ENCODE measurements at regions of chr7 and their contacts with region 1.

Region 1: GRCh38 chr7:57398548-57398947 is 51.4 kb upstream of the ZNF716 start:
- DNase-seq: no peak
- ATAC-seq: no peak
- H3K4me3 ChIP-seq: no peak overlapping the region
- H3K27ac ChIP-seq: no peak overlapping the region
- H3K4me1 ChIP-seq: no peaks in the 10 kb centered on the region
- H3K27me3 ChIP-seq: no peaks in the 10 kb centered on the region
- CTCF ChIP-seq: no peak

Region 2: GRCh38 chr7:55957190-55957963 is 1441.2 kb before region 1 on chr7:
- CTCF ChIA-PET with region 1: no interaction called
- POLR2A ChIA-PET with region 1: no interaction called
- in situ Hi-C with region 1: no loop called
- intact Hi-C with region 1: no loop called
- DNase-seq: no peak
- ATAC-seq: no peak
- H3K4me3 ChIP-seq: no peak overlapping the region
- H3K27ac ChIP-seq: no peak overlapping the region
- H3K4me1 ChIP-seq: no peaks in the 10 kb centered on the region
- H3K27me3 ChIP-seq: no peaks in the 10 kb centered on the region
- CTCF ChIP-seq: no peak

Region 3: DNA sequence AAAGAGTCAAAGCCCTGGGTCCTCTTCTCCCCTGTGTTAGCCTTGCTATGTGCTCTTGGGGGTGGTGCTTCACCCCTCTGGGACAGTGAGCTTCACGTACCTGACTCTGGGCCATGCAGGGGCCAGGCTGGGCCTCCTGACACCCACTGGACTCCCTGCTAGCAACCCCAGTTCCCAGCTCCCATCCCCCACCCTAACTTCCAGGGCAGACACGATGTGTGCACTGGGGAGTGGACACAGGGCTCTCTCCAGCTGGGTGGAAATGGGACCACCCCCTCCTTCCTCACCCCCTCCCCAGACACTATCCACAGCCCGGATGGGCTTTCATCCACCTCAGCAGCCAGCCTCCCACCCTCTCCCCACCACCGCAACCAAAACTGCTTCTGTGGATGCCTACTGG is 153.3 kb before region 1 on chr7:
- CTCF ChIA-PET with region 1: no interaction called
- POLR2A ChIA-PET with region 1: no interaction called
- in situ Hi-C with region 1: no loop called
- intact Hi-C with region 1: no loop called
- DNase-seq: no peak
- ATAC-seq: no peak
- H3K4me3 ChIP-seq: no peak overlapping the region
- H3K27ac ChIP-seq: no peak overlapping the region
- H3K4me1 ChIP-seq: no peaks in the 10 kb centered on the region
- H3K27me3 ChIP-seq: no peaks in the 10 kb centered on the region
- CTCF ChIP-seq: no peak

Region 4: GRCh38 chr7:57438244-57438643 is 39.7 kb after region 1 on chr7:
- CTCF ChIA-PET with region 1: no interaction called
- POLR2A ChIA-PET with region 1: no interaction called
- in situ Hi-C with region 1: no loop called
- intact Hi-C with region 1: no loop called
- DNase-seq: no peak
- ATAC-seq: no peak
- H3K4me3 ChIP-seq: no peak overlapping the region
- H3K27ac ChIP-seq: no peak overlapping the region
- H3K4me1 ChIP-seq: no peaks in the 10 kb centered on the region
- H3K27me3 ChIP-seq: no peaks in the 10 kb centered on the region
- CTCF ChIP-seq: no peak

Region 5: GRCh38 chr7:57449904-57450303 is 51.4 kb after region 1 on chr7 and contains the start of gene ZNF716:
- CTCF ChIA-PET with region 1: no interaction called
- POLR2A ChIA-PET with region 1: no interaction called
- in situ Hi-C with region 1: no loop called
- intact Hi-C with region 1: loop called (anchors 10 kb)
- DNase-seq: no peak
- ATAC-seq: peak; percentile 78
- H3K4me3 ChIP-seq: peak within 1 kb of the TSS; percentile 22 to 35
- H3K27ac ChIP-seq: no peak within 1 kb of the TSS
- H3K4me1 ChIP-seq: no peaks in the 10 kb centered on the region
- H3K27me3 ChIP-seq: no peaks in the 10 kb centered on the region
- CTCF ChIP-seq: no peak
- total RNA-seq, gene ZNF716: 0.36 TPM

Measured in Panc1 (cell line).